B cell (primary cell): ENCODE measurements at regions of chrX and their contacts with region 1.

Region 1: GRCh38 chrX:56248492-56248891 is 16.3 kb downstream of the KLF8 start:
- DNase-seq: peak; percentile 69
- ATAC-seq: peak; percentile 72
- H3K4me3 ChIP-seq: no peak overlapping the region
- H3K4me3 Mint-ChIP-seq: no peak overlapping the region
- H3K27ac ChIP-seq: no peak overlapping the region
- H3K27ac Mint-ChIP-seq: no peak overlapping the region
- H3K4me1 ChIP-seq: peaks cover 0 to 9% of the 10 kb centered on the region in 2 donors
- H3K4me1 Mint-ChIP-seq: peaks cover 22% of the 10 kb centered on the region
- H3K27me3 ChIP-seq: no peaks in the 10 kb centered on the region
- H3K27me3 Mint-ChIP-seq: no peaks in the 10 kb centered on the region
- CTCF ChIP-seq: peak; percentile 69

Region 2: GRCh38 chrX:54891573-54891972 is 1356.9 kb before region 1 on chrX:
- CTCF ChIA-PET with region 1: no interaction called
- POLR2A ChIA-PET with region 1: no interaction called
- intact Hi-C with region 1: loop called (anchors 5 kb)
- DNase-seq: peak; percentile 47
- ATAC-seq: no peak
- H3K4me3 ChIP-seq: no peak overlapping the region
- H3K4me3 Mint-ChIP-seq: no peak overlapping the region
- H3K27ac ChIP-seq: no peak overlapping the region
- H3K27ac Mint-ChIP-seq: no peak overlapping the region
- H3K4me1 ChIP-seq: no peaks in the 10 kb centered on the region
- H3K4me1 Mint-ChIP-seq: no peaks in the 10 kb centered on the region
- H3K27me3 ChIP-seq: peaks cover 0 to 3% (median 0%) of the 10 kb centered on the region in 4 experiments
- H3K27me3 Mint-ChIP-seq: peaks cover 14% of the 10 kb centered on the region
- CTCF ChIP-seq: peak; percentile 39

Region 3: GRCh38 chrX:55801805-55802204 is 446.7 kb before region 1 on chrX:
- CTCF ChIA-PET with region 1: interaction called, 17 read pairs
- POLR2A ChIA-PET with region 1: no interaction called
- intact Hi-C with region 1: no loop called
- DNase-seq: peak; percentile 6
- ATAC-seq: no peak
- H3K4me3 ChIP-seq: no peak overlapping the region
- H3K4me3 Mint-ChIP-seq: no peak overlapping the region
- H3K27ac ChIP-seq: no peak overlapping the region
- H3K27ac Mint-ChIP-seq: no peak overlapping the region
- H3K4me1 ChIP-seq: no peaks in the 10 kb centered on the region
- H3K4me1 Mint-ChIP-seq: peaks cover 3% of the 10 kb centered on the region
- H3K27me3 ChIP-seq: no peaks in the 10 kb centered on the region
- H3K27me3 Mint-ChIP-seq: no peaks in the 10 kb centered on the region
- CTCF ChIP-seq: no peak

Region 4: GRCh38 chrX:55907968-55908607 is 340.4 kb before region 1 on chrX:
- CTCF ChIA-PET with region 1: interaction called, 20 read pairs
- POLR2A ChIA-PET with region 1: no interaction called
- intact Hi-C with region 1: loop called (anchors 5 kb)
- DNase-seq: peak; percentile 65
- ATAC-seq: peak; percentile 77
- H3K4me3 ChIP-seq: peak overlapping the region; percentile 65 to 71 (median 68)
- H3K4me3 Mint-ChIP-seq: peak overlapping the region; percentile 98
- H3K27ac ChIP-seq: peak overlapping the region; percentile 57 to 61
- H3K27ac Mint-ChIP-seq: peak overlapping the region; percentile 96
- H3K4me1 ChIP-seq: peaks cover 13 to 18% of the 10 kb centered on the region in 2 donors
- H3K4me1 Mint-ChIP-seq: peaks cover 32% of the 10 kb centered on the region
- H3K27me3 ChIP-seq: no peaks in the 10 kb centered on the region
- H3K27me3 Mint-ChIP-seq: no peaks in the 10 kb centered on the region
- CTCF ChIP-seq: peak; percentile 57

Region 5: DNA sequence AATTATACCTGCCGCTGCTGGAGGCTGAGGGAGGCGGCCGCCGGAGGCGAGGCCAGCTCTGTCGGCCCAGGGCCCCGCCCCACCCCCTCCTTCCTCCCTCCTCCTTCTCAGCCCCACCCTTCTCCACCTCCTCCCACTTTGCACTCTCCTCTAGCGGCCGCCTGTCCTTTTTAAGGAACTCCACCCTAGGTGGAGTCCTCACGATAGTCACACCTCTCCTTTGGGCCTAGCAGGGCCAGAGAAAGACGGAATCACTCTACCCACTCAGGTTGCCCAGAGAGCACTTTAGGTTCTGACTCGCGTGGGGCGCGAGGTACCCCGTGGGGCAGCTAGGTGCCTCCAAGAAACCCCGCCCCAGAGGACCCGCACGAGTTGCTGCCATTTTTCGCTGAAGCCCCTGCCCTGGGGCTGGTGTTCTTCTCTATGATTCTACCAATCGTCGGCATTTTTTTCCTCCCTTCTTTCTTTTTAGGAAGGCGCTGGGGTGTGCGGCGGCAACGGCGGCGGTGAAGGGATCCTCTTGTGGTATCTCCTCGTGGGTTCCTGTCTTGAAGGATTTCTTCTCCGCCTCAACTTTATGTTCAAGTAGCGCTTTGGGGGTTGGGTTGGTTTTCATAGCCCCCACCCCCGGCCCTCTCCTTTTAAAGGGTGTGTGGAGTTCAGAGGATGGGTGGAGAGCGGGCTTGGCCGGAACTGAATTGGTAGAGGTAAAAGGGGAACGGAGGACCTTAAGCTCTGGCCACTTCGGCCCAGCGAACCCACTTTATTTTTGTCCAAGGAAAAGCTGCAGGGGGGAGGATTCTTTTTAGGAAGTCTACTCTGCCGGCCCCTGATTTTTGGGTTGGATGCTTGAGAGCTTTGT is 16.0 kb before region 1 on chrX and contains the start of gene KLF8:
- CTCF ChIA-PET with region 1: interaction called, 26 read pairs
- POLR2A ChIA-PET with region 1: no interaction called
- intact Hi-C with region 1: loop called (anchors 1 kb)
- DNase-seq: peak; percentile 64
- ATAC-seq: peak; percentile 80
- H3K4me3 ChIP-seq: peak within 1 kb of the TSS; percentile 11 to 76 (median 58)
- H3K4me3 Mint-ChIP-seq: peak within 1 kb of the TSS; percentile 88
- H3K27ac ChIP-seq: peak within 1 kb of the TSS; percentile 50 to 64
- H3K27ac Mint-ChIP-seq: peak within 1 kb of the TSS; percentile 90
- H3K4me1 ChIP-seq: peaks cover 19 to 25% of the 10 kb centered on the region in 2 donors
- H3K4me1 Mint-ChIP-seq: peaks cover 37% of the 10 kb centered on the region
- H3K27me3 ChIP-seq: no peaks in the 10 kb centered on the region
- H3K27me3 Mint-ChIP-seq: no peaks in the 10 kb centered on the region
- CTCF ChIP-seq: no peak
- total RNA-seq, gene KLF8: 42.7 and 43.1 TPM in 2 replicates

Region 6: GRCh38 chrX:56729152-56729850 is 480.8 kb after region 1 on chrX and contains the start of gene NBDY:
- CTCF ChIA-PET with region 1: interaction called, 20 read pairs
- POLR2A ChIA-PET with region 1: no interaction called
- intact Hi-C with region 1: no loop called
- DNase-seq: peak; percentile 53
- ATAC-seq: peak; percentile 76
- H3K4me3 ChIP-seq: peak within 1 kb of the TSS; percentile 67 to 78 (median 71)
- H3K4me3 Mint-ChIP-seq: peak within 1 kb of the TSS; percentile 96
- H3K27ac ChIP-seq: peak within 1 kb of the TSS; percentile 78 to 86
- H3K27ac Mint-ChIP-seq: peak within 1 kb of the TSS; percentile 90
- H3K4me1 ChIP-seq: peaks cover 5 to 11% of the 10 kb centered on the region in 2 donors
- H3K4me1 Mint-ChIP-seq: peaks cover 28% of the 10 kb centered on the region
- H3K27me3 ChIP-seq: no peaks in the 10 kb centered on the region
- H3K27me3 Mint-ChIP-seq: no peaks in the 10 kb centered on the region
- CTCF ChIP-seq: no peak
- total RNA-seq, gene NBDY: 31.8 and 36.5 TPM in 2 replicates